Activated CD8-positive, alpha-beta T cell treated with anti-CD3 and anti-CD28 coated beads for 36 hours (primary cell): ENCODE measurements at regions of chr15 and their contacts with region 1.

Region 1: DNA sequence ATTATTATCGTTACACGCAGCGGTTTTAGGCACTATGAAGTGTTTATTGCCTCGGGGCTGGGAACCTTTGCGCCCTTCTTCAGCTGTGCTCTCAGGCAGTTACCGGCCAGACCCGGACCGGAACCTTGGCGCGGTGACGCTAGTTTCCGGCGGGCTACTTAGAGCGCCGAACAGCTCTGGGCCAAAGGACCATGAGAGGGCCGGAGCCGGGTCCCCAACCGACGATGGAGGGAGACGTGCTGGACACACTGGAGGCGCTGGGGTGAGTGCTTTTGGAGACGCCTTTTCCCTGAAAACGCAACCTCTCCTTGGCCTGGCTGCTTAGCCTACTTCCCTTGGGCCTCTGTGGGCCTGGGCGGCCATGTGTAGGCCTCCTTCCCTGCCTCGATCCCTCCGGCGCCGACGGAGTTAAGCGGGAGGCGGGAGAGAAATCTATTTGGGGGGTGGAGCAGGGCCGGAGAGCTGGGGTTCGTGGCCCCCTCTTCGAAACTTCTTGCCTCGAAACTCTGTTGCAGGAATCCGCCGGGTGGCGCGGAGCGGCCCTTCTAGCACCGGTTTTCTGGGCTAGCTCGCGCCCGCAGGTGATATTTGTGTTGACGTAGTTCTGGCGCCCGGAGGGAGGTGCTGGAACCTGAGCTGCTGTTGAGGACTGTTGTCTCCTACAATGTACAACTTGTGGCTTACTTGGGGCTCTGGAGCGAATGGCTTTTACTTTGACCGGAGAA is at the start of gene FAM98B:
- DNase-seq: peak; percentile 89
- ATAC-seq: peak; percentile 95
- H3K4me3 Mint-ChIP-seq: peak within 1 kb of the TSS; percentile 95
- H3K27ac Mint-ChIP-seq: peak within 1 kb of the TSS; percentile 93
- H3K4me1 Mint-ChIP-seq: peaks cover 30% of the 10 kb centered on the region
- H3K27me3 Mint-ChIP-seq: no peaks in the 10 kb centered on the region
- CTCF ChIP-seq: no peak
- total RNA-seq, gene FAM98B: 51.0 to 61.8 TPM

Region 2: DNA sequence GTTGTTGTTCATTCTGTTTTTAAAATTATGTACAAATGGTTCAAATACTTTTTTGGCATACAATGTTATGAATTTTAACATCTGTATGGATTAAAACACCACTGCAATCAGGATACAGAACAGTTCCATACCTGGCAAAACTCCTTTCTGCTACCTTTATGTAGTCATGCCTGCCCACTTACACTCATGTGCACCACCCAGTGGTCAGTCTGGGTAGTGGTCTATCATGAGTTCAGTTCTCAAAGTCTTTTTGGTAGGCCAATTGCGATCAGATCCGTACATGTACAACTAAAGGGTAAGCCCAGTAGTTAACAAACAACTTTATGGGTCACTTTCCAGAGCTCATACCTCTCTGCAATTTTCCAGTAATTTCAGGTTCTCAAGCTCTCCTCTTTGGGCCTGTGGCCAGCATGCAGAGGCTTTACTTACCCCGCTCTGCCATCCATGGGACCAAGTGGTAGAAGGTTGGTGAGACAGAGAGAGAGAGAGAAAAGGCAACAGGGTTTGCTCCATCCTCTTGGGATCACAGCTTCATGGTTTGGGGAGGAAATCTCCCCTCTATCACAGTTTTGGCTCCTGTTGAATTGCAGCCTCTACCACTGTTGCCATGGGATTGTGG is 64.1 kb before region 1 on chr15:
- CTCF ChIA-PET with region 1: no interaction called
- POLR2A ChIA-PET with region 1: no interaction called
- intact Hi-C with region 1: no loop called
- DNase-seq: peak; percentile 80
- ATAC-seq: peak; percentile 87
- H3K4me3 Mint-ChIP-seq: no peak overlapping the region
- H3K27ac Mint-ChIP-seq: no peak overlapping the region
- H3K4me1 Mint-ChIP-seq: no peaks in the 10 kb centered on the region
- H3K27me3 Mint-ChIP-seq: peaks cover 13% of the 10 kb centered on the region
- CTCF ChIP-seq: peak; percentile 89

Region 3: DNA sequence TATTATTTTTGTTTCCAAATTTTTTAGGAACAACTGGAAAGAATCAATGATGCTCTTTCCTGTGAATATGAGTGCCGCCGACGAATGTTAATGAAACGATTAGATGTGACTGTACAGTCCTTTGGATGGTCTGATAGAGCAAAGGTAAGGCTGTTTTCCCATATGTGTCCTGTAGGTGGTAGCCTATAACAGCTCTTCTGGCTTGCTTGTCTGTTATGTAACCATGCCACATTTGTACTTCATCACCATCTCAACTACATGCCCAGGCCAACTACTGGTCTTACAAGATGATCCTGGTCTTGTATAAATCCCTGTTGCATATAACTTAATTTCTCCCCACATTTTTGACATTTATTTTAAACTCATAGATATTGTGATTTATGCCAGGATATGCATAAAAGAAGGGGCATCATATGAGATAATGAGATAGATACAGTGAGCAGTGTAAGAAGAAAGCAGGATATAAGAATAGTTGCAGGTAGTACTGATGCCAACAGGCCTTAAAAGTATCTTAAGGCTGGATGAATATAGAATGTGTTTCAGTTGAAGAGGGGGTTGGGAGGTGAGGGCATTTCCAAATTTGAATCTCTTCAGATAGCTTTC is 20.1 kb after region 1 on chr15:
- CTCF ChIA-PET with region 1: interaction called, 10 read pairs
- POLR2A ChIA-PET with region 1: interaction called, 6 read pairs
- intact Hi-C with region 1: no loop called
- DNase-seq: peak; percentile 24
- ATAC-seq: peak; percentile 97
- H3K4me3 Mint-ChIP-seq: no peak overlapping the region
- H3K27ac Mint-ChIP-seq: no peak overlapping the region
- H3K4me1 Mint-ChIP-seq: peaks cover 2% of the 10 kb centered on the region
- H3K27me3 Mint-ChIP-seq: no peaks in the 10 kb centered on the region
- CTCF ChIP-seq: peak; percentile 79

Region 4: GRCh38 chr15:38479266-38479665 is 25.1 kb after region 1 on chr15:
- CTCF ChIA-PET with region 1: interaction called, 10 read pairs
- POLR2A ChIA-PET with region 1: interaction called, 3 read pairs
- intact Hi-C with region 1: loop called (anchors 5 kb)
- DNase-seq: no peak
- ATAC-seq: no peak
- H3K4me3 Mint-ChIP-seq: no peak overlapping the region
- H3K27ac Mint-ChIP-seq: no peak overlapping the region
- H3K4me1 Mint-ChIP-seq: peaks cover 27% of the 10 kb centered on the region
- H3K27me3 Mint-ChIP-seq: no peaks in the 10 kb centered on the region
- CTCF ChIP-seq: no peak